Activated B cell treated with CpG ODN at 0.5 μM for 24 hours (primary cell): ENCODE measurements at regions of chr6 and their contacts with region 1.

Region 1: DNA sequence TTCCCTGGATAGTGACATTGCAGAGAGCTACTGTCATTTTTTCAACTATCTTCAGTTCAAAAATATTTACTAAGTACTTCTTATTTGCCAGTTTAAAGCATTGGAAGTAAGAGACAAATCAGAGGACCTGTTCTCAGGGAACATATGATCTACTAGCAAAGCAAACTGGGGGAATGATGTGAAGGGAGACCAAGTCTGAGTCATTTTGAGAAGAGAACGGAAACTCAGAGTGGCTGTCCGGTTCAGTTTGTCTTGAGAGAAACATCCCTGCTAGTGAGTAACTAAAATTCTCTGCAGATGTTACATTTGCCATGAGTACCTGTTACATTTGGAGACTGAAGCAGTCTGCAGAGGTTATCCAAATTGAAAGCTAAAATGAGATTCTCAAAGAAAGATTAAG is 118.3 kb downstream of the KCNQ5 start:
- DNase-seq: no peak
- ATAC-seq: peak; percentile 84
- H3K4me3 Mint-ChIP-seq: peak overlapping the region; percentile 11
- H3K27ac Mint-ChIP-seq: peak overlapping the region; percentile 37
- H3K4me1 Mint-ChIP-seq: peaks cover 34% of the 10 kb centered on the region
- H3K27me3 Mint-ChIP-seq: no peaks in the 10 kb centered on the region
- CTCF ChIP-seq: no peak

Region 2: DNA sequence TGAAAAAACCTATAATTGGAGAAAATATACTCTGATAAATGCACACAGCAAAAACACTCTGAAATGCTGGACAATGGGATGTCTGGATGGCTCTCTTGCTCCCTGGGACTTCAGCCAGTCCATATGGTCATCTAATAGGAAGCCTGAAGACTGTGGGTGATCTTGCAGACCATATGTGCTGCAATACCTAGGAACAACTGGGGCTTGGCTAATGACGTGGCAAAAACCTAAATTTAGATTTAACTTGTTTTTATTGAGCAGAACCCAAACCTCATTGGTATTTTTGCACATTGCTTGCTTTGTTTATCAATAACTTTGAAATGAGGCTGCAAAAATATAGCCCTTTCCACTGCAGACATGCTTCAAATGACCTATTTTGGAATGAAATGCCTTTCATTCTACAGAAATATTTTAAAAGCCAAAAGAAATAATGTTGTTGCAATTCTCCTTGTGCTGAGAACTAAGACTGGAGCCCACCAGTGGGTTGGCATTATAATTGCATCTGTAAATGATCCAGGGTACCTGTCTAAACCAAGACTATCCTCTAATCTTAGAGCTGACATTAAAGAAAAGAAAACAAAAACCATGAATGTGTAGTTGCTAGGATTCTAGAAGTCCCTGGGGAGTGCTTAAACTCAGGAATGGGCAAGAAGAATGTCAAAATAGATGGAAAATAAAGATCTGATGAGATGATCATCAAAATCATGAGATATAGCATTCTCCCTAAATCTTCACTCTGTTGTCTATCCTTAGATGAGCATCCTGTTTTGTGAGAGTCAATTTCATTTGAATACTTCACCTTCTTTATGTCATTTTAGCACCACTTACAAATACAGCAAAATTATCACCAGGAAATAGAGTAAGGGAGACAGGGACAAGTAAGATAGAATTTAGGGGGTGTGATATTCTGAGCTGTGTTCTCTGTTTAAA is 1005.9 kb before region 1 on chr6:
- CTCF ChIA-PET with region 1: no interaction called
- POLR2A ChIA-PET with region 1: no interaction called
- intact Hi-C with region 1: no loop called
- DNase-seq: no peak
- ATAC-seq: no peak
- H3K4me3 Mint-ChIP-seq: no peak overlapping the region
- H3K27ac Mint-ChIP-seq: no peak overlapping the region
- H3K4me1 Mint-ChIP-seq: no peaks in the 10 kb centered on the region
- H3K27me3 Mint-ChIP-seq: no peaks in the 10 kb centered on the region
- CTCF ChIP-seq: no peak

Region 3: GRCh38 chr6:72724545-72724944 is 15.6 kb before region 1 on chr6:
- CTCF ChIA-PET with region 1: no interaction called
- POLR2A ChIA-PET with region 1: no interaction called
- intact Hi-C with region 1: loop called (anchors 1 kb)
- DNase-seq: no peak
- ATAC-seq: peak; percentile 65
- H3K4me3 Mint-ChIP-seq: no peak overlapping the region
- H3K27ac Mint-ChIP-seq: no peak overlapping the region
- H3K4me1 Mint-ChIP-seq: peaks cover 32% of the 10 kb centered on the region
- H3K27me3 Mint-ChIP-seq: no peaks in the 10 kb centered on the region
- CTCF ChIP-seq: no peak

Region 4: GRCh38 chr6:72769459-72770125 is 29.5 kb after region 1 on chr6:
- CTCF ChIA-PET with region 1: no interaction called
- POLR2A ChIA-PET with region 1: no interaction called
- intact Hi-C with region 1: no loop called
- DNase-seq: no peak
- ATAC-seq: no peak
- H3K4me3 Mint-ChIP-seq: no peak overlapping the region
- H3K27ac Mint-ChIP-seq: peak overlapping the region; percentile 19
- H3K4me1 Mint-ChIP-seq: peaks cover 26% of the 10 kb centered on the region
- H3K27me3 Mint-ChIP-seq: no peaks in the 10 kb centered on the region
- CTCF ChIP-seq: no peak